ENCODE measurements at regions of chr7 and their contacts with region 1.

Region 1: DNA sequence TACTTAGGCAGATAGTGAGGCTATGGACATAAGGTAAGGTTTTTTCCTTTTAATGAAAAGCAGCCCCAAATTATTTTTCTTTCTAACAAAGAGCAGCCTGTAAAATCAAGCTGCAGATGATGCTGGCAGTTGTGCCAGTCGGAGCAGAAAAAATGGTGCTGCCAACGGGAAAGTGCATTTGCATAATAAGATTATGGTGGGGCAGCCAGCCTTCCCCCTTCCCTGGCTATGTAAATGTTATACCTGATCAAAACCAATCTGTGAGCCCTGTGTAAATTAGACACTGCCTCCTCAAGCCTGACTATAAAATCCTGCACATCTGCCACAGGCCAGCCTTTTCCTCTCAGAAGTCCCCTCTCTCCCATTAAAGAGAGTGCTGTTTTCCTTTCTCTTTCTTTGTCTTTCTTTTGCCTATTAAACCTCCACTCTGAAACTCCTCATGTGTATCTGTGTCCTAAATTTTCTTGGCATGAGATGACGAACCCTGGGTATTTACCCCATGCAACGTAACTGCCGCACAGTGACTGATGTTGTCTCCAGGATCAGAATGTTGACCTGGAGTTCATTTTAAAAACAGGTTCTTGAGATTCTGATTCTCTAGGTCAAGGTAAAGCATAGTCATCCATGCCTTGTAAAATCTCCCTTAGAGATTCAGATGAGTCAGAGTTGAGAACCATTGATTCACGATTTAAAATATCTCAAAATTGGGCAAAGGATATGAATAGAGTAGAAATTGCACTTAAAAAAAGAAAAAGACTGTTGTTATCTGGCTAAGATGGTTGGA is 167.3 kb upstream of the C1GALT1 start:
- DNase-seq: peak in 1 of 2 experiments; percentile 79
- H3K4me3 ChIP-seq: no peak overlapping the region
- H3K27ac ChIP-seq: no peak overlapping the region
- H3K4me1 ChIP-seq: peaks cover 21% of the 10 kb centered on the region
- H3K27me3 ChIP-seq: 0 out of 2 replicates have a peak, but pooled peaks cover 5% of the 10 kb centered on the region
- CTCF ChIP-seq: no peak

Region 2: DNA sequence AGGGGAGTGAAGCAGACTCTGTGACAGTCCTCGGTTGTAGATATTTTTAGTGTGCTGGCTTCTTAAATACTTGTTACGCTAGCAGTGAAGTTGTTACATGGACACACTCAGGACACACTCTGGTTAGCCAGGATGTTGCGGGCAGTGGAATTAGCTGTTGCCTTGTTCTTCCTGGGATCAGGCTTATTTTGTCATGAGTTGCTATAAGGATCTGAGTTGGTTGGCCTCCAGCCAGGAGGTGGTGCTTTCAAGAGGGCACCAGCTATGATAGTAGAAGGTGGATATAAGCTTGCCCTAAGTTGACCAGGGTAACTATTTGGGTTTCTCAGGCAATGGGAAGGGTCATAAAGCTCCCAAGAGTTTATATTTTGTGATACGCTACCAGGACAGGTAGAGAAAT is 17.2 kb after region 1 on chr7:
- CTCF ChIA-PET with region 1: no interaction called
- POLR2A ChIA-PET with region 1: interaction called, 19 read pairs
- intact Hi-C with region 1: no loop called
- DNase-seq: no peak
- H3K4me3 ChIP-seq: no peak overlapping the region
- H3K27ac ChIP-seq: no peak overlapping the region
- H3K4me1 ChIP-seq: no peaks in the 10 kb centered on the region
- H3K27me3 ChIP-seq: no peaks in the 10 kb centered on the region
- CTCF ChIP-seq: no peak

Region 3: DNA sequence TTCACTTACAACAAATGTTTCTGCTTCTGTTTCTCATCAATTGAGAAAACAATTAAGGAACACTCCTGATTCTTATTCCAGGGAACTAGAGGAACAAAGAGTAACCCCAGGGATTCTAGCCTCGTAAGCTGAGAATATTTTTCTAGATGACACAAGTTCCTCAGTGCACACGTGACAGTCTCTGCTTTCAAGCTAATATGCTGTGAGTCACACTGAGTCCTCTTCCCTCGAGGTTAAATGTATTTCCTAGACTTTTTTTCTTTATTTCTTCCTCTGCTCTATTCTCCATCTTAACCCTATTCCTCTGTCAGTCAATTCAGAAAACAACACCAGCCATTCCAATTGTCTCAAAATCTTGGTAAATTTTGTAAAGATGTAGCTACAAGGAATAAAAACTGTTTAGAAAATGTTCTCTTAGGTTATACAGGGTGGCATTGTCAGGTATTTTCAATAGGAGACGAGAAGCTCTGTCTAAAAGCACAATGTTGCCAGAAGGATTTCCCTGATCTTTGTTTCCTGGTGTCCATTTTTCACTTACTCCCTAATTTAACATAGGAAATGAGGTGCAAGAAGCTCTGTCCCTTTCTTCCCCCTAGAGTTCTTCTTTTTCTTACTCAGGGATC is 161.5 kb after region 1 on chr7:
- CTCF ChIA-PET with region 1: no interaction called
- POLR2A ChIA-PET with region 1: no interaction called
- intact Hi-C with region 1: loop called (anchors 5 kb)
- DNase-seq: peak; percentile 24 to 83
- H3K4me3 ChIP-seq: peak overlapping the region; percentile 3; the same call in 1 of the 2 replicates
- H3K27ac ChIP-seq: peak overlapping the region; percentile 87
- H3K4me1 ChIP-seq: peaks cover 47% of the 10 kb centered on the region
- H3K27me3 ChIP-seq: no peaks in the 10 kb centered on the region
- CTCF ChIP-seq: no peak